CD4-positive, alpha-beta memory T cell (primary cell): ENCODE measurements at regions of chr19 and their contacts with region 1.

Region 1: GRCh38 chr19:19663256-19664038 is at the start of gene ATP13A1:
- DNase-seq: peak; percentile 95 to 98 (median 96)
- H3K4me3 ChIP-seq: peak within 1 kb of the TSS; percentile 78 to 89
- H3K4me3 Mint-ChIP-seq: peak within 1 kb of the TSS; percentile 92 to 96 (median 93)
- H3K27ac ChIP-seq: peak within 1 kb of the TSS; percentile 89
- H3K27ac Mint-ChIP-seq: peak within 1 kb of the TSS; percentile 95 to 99 (median 98)
- H3K4me1 ChIP-seq: peaks cover 58% of the 10 kb centered on the region
- H3K4me1 Mint-ChIP-seq: peaks cover 24 to 51% (median 38%) of the 10 kb centered on the region in 4 donors
- H3K27me3 ChIP-seq: no peaks in the 10 kb centered on the region
- H3K27me3 Mint-ChIP-seq: no peaks in the 10 kb centered on the region
- total RNA-seq, gene ATP13A1: 137 to 139 TPM

Region 2: GRCh38 chr19:19192078-19192882 is 471.2 kb before region 1 on chr19 and contains the starts of genes BORCS8 and RFXANK:
- CTCF ChIA-PET with region 1: no interaction called
- POLR2A ChIA-PET with region 1: no interaction called
- intact Hi-C with region 1: loop called (anchors 2 kb)
- DNase-seq: peak; percentile 97 to 99 (median 99)
- H3K4me3 ChIP-seq: peak within 1 kb of the TSS; percentile 98 to 100
- H3K4me3 Mint-ChIP-seq: peak within 1 kb of the TSS; percentile 95 to 99 (median 98)
- H3K27ac ChIP-seq: peak within 1 kb of the TSS; percentile 100
- H3K27ac Mint-ChIP-seq: peak within 1 kb of the TSS; percentile 98 to 100 (median 99)
- H3K4me1 ChIP-seq: peaks cover 44% of the 10 kb centered on the region
- H3K4me1 Mint-ChIP-seq: peaks cover 18 to 55% (median 37%) of the 10 kb centered on the region in 4 donors
- H3K27me3 ChIP-seq: no peaks in the 10 kb centered on the region
- H3K27me3 Mint-ChIP-seq: no peaks in the 10 kb centered on the region
- total RNA-seq, gene BORCS8: 36.0 to 41.2 TPM
- total RNA-seq, gene RFXANK: 69.5 to 77.2 TPM

Region 3: DNA sequence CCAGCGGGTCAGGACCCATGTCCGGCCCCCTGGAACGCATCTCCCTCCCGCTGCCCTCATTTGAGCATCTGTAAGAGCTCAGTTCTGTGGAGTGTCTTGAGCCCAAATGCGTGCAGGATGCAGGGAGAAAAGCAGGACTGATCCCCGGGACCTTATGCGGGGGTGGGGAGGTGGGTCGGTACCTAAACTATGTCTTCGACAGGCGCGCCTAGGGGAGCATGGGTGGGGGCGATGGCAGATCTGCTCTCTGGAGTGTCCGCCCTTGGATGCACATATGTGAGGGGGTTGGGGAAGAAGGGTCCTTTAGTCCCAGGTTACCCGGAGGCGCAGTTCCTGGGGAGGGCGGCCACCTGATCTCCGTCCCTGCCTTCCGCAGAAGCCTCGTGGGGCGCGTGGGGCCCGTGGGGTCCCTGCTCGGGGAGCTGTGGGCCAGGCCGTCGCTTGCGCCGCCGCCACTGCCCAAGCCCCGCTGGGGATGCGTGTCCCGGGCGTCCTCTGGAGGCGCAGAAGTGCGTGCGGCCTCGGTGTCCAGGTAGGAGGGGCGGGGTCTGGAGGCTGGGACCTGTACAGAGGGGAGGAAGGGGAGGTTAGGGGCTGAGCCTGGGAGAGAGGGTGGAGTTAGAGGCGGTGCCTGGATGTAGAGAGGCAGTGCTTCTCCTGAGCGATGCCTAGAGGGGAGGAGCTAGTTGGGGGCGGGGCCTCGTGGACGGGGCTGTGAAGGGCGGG is 122.6 kb before region 1 on chr19:
- CTCF ChIA-PET with region 1: no interaction called
- POLR2A ChIA-PET with region 1: interaction called, 15 read pairs
- intact Hi-C with region 1: no loop called
- DNase-seq: peak; percentile 67 to 86 (median 70)
- H3K4me3 ChIP-seq: peak overlapping the region in 1 of 2 donors; percentile 46
- H3K4me3 Mint-ChIP-seq: peak overlapping the region; percentile 67 to 82 (median 76)
- H3K27ac ChIP-seq: no peak overlapping the region
- H3K27ac Mint-ChIP-seq: peak overlapping the region in 6 of 7 donors; percentile 36 to 89 (median 75)
- H3K4me1 ChIP-seq: peaks cover 27% of the 10 kb centered on the region
- H3K4me1 Mint-ChIP-seq: peaks cover 17 to 36% (median 27%) of the 10 kb centered on the region in 4 donors
- H3K27me3 ChIP-seq: no peaks in the 10 kb centered on the region
- H3K27me3 Mint-ChIP-seq: peaks cover 0 to 1% of the 10 kb centered on the region in 2 donors

Region 4: GRCh38 chr19:19618219-19619051 is 45.0 kb before region 1 on chr19 and contains the start of gene PBX4:
- CTCF ChIA-PET with region 1: no interaction called
- POLR2A ChIA-PET with region 1: interaction called, 7 read pairs
- intact Hi-C with region 1: loop called (anchors 5 kb)
- DNase-seq: peak; percentile 99
- H3K4me3 ChIP-seq: peak within 1 kb of the TSS; percentile 71 to 86
- H3K4me3 Mint-ChIP-seq: peak within 1 kb of the TSS; percentile 90 to 98 (median 94)
- H3K27ac ChIP-seq: peak within 1 kb of the TSS; percentile 93
- H3K27ac Mint-ChIP-seq: peak within 1 kb of the TSS; percentile 86 to 99 (median 97)
- H3K4me1 ChIP-seq: peaks cover 53% of the 10 kb centered on the region
- H3K4me1 Mint-ChIP-seq: peaks cover 33 to 49% (median 40%) of the 10 kb centered on the region in 4 donors
- H3K27me3 ChIP-seq: no peaks in the 10 kb centered on the region
- H3K27me3 Mint-ChIP-seq: no peaks in the 10 kb centered on the region
- total RNA-seq, gene PBX4: 46.5 to 56.3 TPM

Region 5: GRCh38 chr19:19686580-19686979 is 23.1 kb after region 1 on chr19:
- CTCF ChIA-PET with region 1: no interaction called
- POLR2A ChIA-PET with region 1: interaction called, 77 read pairs
- intact Hi-C with region 1: no loop called
- DNase-seq: no peak
- H3K4me3 ChIP-seq: no peak overlapping the region
- H3K4me3 Mint-ChIP-seq: no peak overlapping the region
- H3K27ac ChIP-seq: no peak overlapping the region
- H3K27ac Mint-ChIP-seq: peak overlapping the region in 1 of 7 donors; percentile 74
- H3K4me1 ChIP-seq: no peaks in the 10 kb centered on the region
- H3K4me1 Mint-ChIP-seq: peaks cover 0 to 9% (median 1%) of the 10 kb centered on the region in 4 donors
- H3K27me3 ChIP-seq: no peaks in the 10 kb centered on the region
- H3K27me3 Mint-ChIP-seq: no peaks in the 10 kb centered on the region

Region 6: DNA sequence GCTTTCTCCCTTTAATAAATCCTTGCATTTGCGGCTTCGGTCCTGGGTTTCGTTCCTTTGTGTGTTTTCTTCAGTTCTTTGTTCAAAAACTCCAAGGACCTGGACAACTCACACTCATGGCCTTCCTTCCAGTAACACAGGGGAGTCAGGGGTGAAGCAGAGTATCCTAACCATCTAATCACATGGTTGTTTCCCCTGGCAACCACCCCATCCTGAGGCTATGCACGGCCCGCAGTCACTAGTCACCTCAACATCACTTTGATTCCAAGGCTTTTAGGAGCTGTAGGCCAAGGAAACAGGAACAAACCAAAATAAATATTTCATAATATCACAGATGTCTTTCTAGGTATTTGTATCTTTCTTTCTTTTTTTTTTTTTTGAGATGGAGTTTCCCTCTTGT is 34.1 kb after region 1 on chr19:
- CTCF ChIA-PET with region 1: no interaction called
- POLR2A ChIA-PET with region 1: no interaction called
- intact Hi-C with region 1: no loop called
- DNase-seq: no peak
- H3K4me3 ChIP-seq: no peak overlapping the region
- H3K4me3 Mint-ChIP-seq: no peak overlapping the region
- H3K27ac ChIP-seq: no peak overlapping the region
- H3K27ac Mint-ChIP-seq: peak overlapping the region in 1 of 7 donors; percentile 8
- H3K4me1 ChIP-seq: no peaks in the 10 kb centered on the region
- H3K4me1 Mint-ChIP-seq: peaks cover 0 to 2% (median 0%) of the 10 kb centered on the region in 4 donors
- H3K27me3 ChIP-seq: no peaks in the 10 kb centered on the region
- H3K27me3 Mint-ChIP-seq: no peaks in the 10 kb centered on the region

Region 7: DNA sequence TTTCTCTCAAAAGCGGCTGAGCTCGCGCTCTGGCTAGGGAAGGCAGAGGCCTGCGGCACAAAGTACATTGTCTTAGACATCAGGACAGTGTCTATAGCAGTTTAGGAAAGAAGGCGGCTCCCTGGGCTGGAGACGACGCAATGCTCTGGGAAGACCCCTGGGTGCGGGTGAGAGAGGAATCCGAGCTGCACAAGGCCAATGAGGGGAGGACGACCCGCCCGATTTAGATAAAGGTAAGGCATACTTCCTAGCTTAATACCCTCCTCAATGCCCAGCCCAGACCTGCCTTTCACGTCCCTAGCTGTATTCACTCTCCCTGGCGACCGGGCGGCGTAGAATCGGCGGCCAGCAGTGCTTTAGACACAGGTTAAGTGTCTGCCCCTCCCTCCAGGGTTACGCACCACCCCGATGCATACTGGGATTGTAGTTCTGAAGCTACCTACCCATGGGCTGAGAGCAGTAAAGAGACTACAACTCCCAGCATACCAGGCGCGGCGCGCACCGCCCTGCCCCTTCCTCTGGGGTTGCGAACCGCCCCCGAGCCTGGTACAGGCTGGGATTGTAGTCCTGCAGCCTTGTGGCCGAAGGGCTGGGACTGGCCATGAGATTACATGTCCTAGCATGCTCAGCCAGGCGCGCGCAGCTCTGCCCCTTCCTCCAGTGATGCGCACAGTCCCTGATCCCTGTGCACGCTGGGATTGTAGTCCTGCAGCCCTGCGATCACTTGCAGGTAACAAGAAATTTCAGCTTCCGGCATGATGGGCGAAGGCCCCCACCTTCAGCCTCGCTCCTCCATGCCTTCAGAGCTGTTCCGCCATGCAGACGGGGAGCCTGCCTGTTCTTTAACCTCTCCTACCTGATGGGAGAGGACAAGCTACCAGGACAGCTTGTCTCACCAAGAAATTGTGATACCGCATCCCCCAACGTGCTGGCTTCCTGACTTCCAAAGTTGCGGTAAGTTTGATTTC is 112.9 kb after region 1 on chr19:
- CTCF ChIA-PET with region 1: no interaction called
- POLR2A ChIA-PET with region 1: interaction called, 70 read pairs
- intact Hi-C with region 1: loop called (anchors 1 kb)
- DNase-seq: peak; percentile 90 to 97 (median 92)
- H3K4me3 ChIP-seq: peak overlapping the region; percentile 100
- H3K4me3 Mint-ChIP-seq: peak overlapping the region; percentile 96 to 100 (median 98)
- H3K27ac ChIP-seq: peak overlapping the region; percentile 70
- H3K27ac Mint-ChIP-seq: peak overlapping the region; percentile 85 to 99 (median 98)
- H3K4me1 ChIP-seq: peaks cover 31% of the 10 kb centered on the region
- H3K4me1 Mint-ChIP-seq: peaks cover 28 to 51% (median 38%) of the 10 kb centered on the region in 4 donors
- H3K27me3 ChIP-seq: no peaks in the 10 kb centered on the region
- H3K27me3 Mint-ChIP-seq: no peaks in the 10 kb centered on the region

Region 8: GRCh38 chr19:19871932-19872331 is 208.5 kb after region 1 on chr19:
- CTCF ChIA-PET with region 1: no interaction called
- POLR2A ChIA-PET with region 1: interaction called, 84 read pairs
- intact Hi-C with region 1: no loop called
- DNase-seq: no peak
- H3K4me3 ChIP-seq: no peak overlapping the region
- H3K4me3 Mint-ChIP-seq: peak overlapping the region in 3 of 8 donors; percentile 18 to 38 (median 27)
- H3K27ac ChIP-seq: peak overlapping the region; percentile 1
- H3K27ac Mint-ChIP-seq: peak overlapping the region in 4 of 7 donors; percentile 0 to 70 (median 31)
- H3K4me1 ChIP-seq: peaks cover 39% of the 10 kb centered on the region
- H3K4me1 Mint-ChIP-seq: peaks cover 35 to 50% (median 40%) of the 10 kb centered on the region in 4 donors
- H3K27me3 ChIP-seq: no peaks in the 10 kb centered on the region
- H3K27me3 Mint-ChIP-seq: no peaks in the 10 kb centered on the region